ENCODE measurements at regions of chr6 and their contacts with region 1.

Region 1: GRCh38 chr6:105601541-105602236 is 198.8 kb upstream of the PREP start:
- DNase-seq: peak; percentile 78
- H3K4me3 Mint-ChIP-seq: peak overlapping the region; percentile 39
- H3K27ac Mint-ChIP-seq: peak overlapping the region; percentile 68
- H3K4me1 Mint-ChIP-seq: peaks cover 12% of the 10 kb centered on the region
- H3K27me3 Mint-ChIP-seq: no peaks in the 10 kb centered on the region

Region 2: GRCh38 chr6:105560611-105561066 is 41.0 kb before region 1 on chr6:
- intact Hi-C with region 1: loop called (anchors 5 kb)
- DNase-seq: peak; percentile 58
- H3K4me3 Mint-ChIP-seq: no peak overlapping the region
- H3K27ac Mint-ChIP-seq: no peak overlapping the region
- H3K4me1 Mint-ChIP-seq: no peaks in the 10 kb centered on the region
- H3K27me3 Mint-ChIP-seq: peaks cover 17% of the 10 kb centered on the region

Region 3: GRCh38 chr6:105620878-105621277 is 19.2 kb after region 1 on chr6:
- intact Hi-C with region 1: loop called (anchors 2 kb)
- DNase-seq: peak; percentile 69
- H3K4me3 Mint-ChIP-seq: peak overlapping the region; percentile 4
- H3K27ac Mint-ChIP-seq: peak overlapping the region; percentile 86
- H3K4me1 Mint-ChIP-seq: peaks cover 26% of the 10 kb centered on the region
- H3K27me3 Mint-ChIP-seq: peaks cover 2% of the 10 kb centered on the region

Region 4: GRCh38 chr6:105872246-105872645 is 270.6 kb after region 1 on chr6:
- intact Hi-C with region 1: no loop called
- DNase-seq: no peak
- H3K4me3 Mint-ChIP-seq: no peak overlapping the region
- H3K27ac Mint-ChIP-seq: no peak overlapping the region
- H3K4me1 Mint-ChIP-seq: peaks cover 12% of the 10 kb centered on the region
- H3K27me3 Mint-ChIP-seq: peaks cover 6% of the 10 kb centered on the region

Measured in activated CD4-positive, alpha-beta T cell treated with anti-CD3 and anti-CD28 coated beads, Interleukin-2, amount 10 ng/mL, durations not matched to agents 24 days and 14 days (primary cell).